Left cardiac atrium (tissue), 4 donors: ENCODE measurements at regions of chr15 and their contacts with region 1.

Region 1: GRCh38 chr15:30791239-30792175 is 112.2 kb upstream of the FAN1 start:
- DNase-seq: no peak
- ATAC-seq: no peak

Region 2: DNA sequence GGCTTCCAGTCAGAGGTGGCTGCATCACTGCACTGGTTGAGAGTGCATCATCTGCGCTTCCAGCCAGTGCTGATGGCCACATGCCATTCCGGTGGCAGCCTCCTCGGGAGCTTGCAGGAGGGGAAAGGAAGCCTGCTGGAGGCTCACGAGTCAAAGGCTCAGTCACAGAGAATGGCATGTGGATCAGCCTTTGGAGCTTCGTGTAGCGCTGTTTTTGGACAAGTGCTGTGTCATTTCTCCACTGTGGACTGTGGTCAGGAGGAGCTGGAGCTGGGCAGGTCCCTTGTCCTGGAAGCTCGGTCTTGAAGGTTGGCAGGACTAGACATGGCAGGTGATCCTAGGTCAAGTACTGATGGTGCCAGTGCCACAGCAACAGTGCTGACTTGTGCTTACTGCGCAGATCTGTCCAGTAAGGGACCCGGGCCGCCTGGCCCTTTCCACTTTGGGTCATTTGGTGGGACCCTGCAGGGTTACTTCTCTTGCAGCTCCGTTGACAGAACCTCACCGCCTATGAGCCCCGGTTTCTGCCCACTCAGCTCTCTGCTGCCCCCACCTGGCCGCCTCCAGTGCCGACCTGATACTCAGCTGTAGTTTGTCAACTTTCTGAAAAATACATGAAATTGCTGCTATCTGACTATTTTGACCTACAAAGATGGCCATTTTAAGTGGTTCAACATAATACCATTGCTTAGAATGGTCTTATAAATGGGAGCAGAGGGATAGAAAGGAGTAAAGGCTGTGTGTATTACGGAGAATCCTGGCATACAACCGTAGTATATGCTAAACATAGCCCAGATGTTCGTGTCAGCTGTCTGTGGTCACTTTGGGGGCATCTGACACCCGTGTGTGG is 337.6 kb after region 1 on chr15:
- intact Hi-C with region 1: loop called in 1 of 2 experiments (anchors 10 kb)
- DNase-seq: peak; percentile 62
- ATAC-seq: peak; percentile 87 to 89